HepG2 (cell line): ENCODE measurements at regions of chr18 and their contacts with region 1.

Region 1: GRCh38 chr18:73093687-73094250 is 226.0 kb upstream of the NETO1 start:
- DNase-seq: no peak
- ATAC-seq: no peak
- H3K4me3 ChIP-seq: no peak overlapping the region
- H3K27ac ChIP-seq: no peak overlapping the region
- H3K4me1 ChIP-seq: no peaks in the 10 kb centered on the region
- H3K27me3 ChIP-seq: no peaks in the 10 kb centered on the region
- CTCF ChIP-seq: no peak
- EP300 ChIP-seq: no peak
- POLR2A ChIP-seq: no peak
- RAD21 ChIP-seq: no peak

Region 2: DNA sequence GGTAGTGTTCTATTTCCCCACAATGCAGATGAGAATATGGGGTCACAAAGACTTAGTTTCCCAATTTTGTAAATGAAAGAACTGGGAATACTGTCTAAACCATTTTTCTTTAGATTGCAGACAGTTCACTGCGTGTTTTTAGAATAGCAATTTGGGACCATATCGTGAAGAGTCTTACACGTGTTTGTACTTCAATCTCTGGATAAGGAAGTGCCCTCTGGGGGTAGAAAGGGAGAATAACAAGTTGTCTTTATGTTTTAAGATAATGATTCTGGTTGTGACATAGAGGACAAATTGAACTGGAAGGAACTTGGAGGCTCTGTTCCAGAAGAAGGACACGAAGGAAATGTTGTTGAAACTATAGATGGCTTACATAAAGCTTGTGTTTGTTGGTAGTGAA is 1007.3 kb before region 1 on chr18:
- CTCF ChIA-PET with region 1: no interaction called
- POLR2A ChIA-PET with region 1: no interaction called
- in situ Hi-C with region 1: no loop called
- intact Hi-C with region 1: no loop called
- DNase-seq: peak; percentile 24
- ATAC-seq: peak; percentile 43; the same call in 1 of the 3 replicates
- H3K4me3 ChIP-seq: no peak overlapping the region
- H3K27ac ChIP-seq: no peak overlapping the region
- H3K4me1 ChIP-seq: no peaks in the 10 kb centered on the region
- H3K27me3 ChIP-seq: no peaks in the 10 kb centered on the region
- CTCF ChIP-seq: peak; percentile 45
- EP300 ChIP-seq: no peak
- POLR2A ChIP-seq: no peak
- RAD21 ChIP-seq: no peak

Region 3: GRCh38 chr18:73079920-73080319 is 13.8 kb before region 1 on chr18:
- CTCF ChIA-PET with region 1: no interaction called
- POLR2A ChIA-PET with region 1: no interaction called
- in situ Hi-C with region 1: no loop called
- intact Hi-C with region 1: no loop called
- DNase-seq: no peak
- ATAC-seq: no peak
- H3K4me3 ChIP-seq: no peak overlapping the region
- H3K27ac ChIP-seq: no peak overlapping the region
- H3K4me1 ChIP-seq: no peaks in the 10 kb centered on the region
- H3K27me3 ChIP-seq: no peaks in the 10 kb centered on the region
- CTCF ChIP-seq: no peak
- EP300 ChIP-seq: no peak
- POLR2A ChIP-seq: no peak
- RAD21 ChIP-seq: no peak

Region 4: GRCh38 chr18:73118121-73118816 is 24.5 kb after region 1 on chr18:
- CTCF ChIA-PET with region 1: no interaction called
- POLR2A ChIA-PET with region 1: no interaction called
- in situ Hi-C with region 1: no loop called
- intact Hi-C with region 1: loop called (anchors 1 kb)
- DNase-seq: no peak
- ATAC-seq: no peak
- H3K4me3 ChIP-seq: no peak overlapping the region
- H3K27ac ChIP-seq: no peak overlapping the region
- H3K4me1 ChIP-seq: no peaks in the 10 kb centered on the region
- H3K27me3 ChIP-seq: no peaks in the 10 kb centered on the region
- CTCF ChIP-seq: no peak
- EP300 ChIP-seq: no peak
- POLR2A ChIP-seq: no peak
- RAD21 ChIP-seq: no peak